ENCODE measurements at regions of chr6 and their contacts with region 1.

Region 1: DNA sequence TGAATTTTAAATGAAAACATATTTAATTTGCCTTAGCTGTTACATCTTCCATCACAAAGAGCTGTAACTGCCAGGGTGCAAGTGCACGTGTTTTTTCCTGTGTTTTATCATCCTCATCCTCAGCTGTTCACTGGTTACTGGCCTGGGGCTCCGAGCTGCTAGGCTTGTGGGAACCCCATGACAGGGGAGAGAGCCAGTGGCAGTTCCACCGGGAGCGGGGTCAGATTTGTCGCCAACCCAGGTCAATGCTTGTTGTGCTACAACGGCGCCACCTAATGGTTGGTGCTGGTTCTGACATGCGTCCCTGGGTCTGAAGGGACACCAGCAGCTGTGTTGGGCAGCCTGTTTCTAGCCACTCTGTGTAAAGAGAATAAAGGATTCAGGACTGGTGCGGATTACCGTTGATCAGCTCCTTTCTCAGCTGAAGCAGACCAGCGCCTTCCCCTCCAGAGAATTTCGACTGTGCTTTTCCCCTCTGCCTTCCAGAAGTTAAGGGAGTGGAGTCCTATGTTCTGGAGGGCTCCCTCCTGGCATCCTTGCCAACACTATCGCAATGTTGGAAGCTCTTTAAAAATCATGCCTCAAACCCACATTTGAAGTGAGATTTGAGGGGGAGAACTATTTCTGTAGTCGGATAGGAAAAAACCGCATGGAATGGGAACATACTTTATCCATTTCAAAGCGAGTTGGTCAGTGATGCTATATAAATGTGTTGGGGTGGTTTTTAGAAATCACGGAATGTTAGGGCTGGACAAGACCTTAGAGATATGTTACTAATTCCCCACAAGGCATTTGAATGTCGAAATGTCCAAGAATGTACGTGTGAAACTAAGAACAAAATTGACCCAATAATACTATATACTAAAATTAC is 32.1 kb downstream of the SUMO4 start:
- DNase-seq: peak; percentile 87
- H3K27ac ChIP-seq: no peak overlapping the region
- CTCF ChIP-seq: peak; percentile 92

Region 2: GRCh38 chr6:149028767-149029405 is 403.3 kb before region 1 on chr6:
- CTCF ChIA-PET with region 1: interaction called, 23 read pairs
- POLR2A ChIA-PET with region 1: no interaction called
- DNase-seq: peak; percentile 50
- H3K27ac ChIP-seq: no peak overlapping the region
- CTCF ChIP-seq: peak; percentile 63

Region 3: GRCh38 chr6:149077208-149077607 is 354.9 kb before region 1 on chr6:
- CTCF ChIA-PET with region 1: interaction called, 11 read pairs
- POLR2A ChIA-PET with region 1: no interaction called
- DNase-seq: no peak
- H3K27ac ChIP-seq: no peak overlapping the region
- CTCF ChIP-seq: no peak

Region 4: DNA sequence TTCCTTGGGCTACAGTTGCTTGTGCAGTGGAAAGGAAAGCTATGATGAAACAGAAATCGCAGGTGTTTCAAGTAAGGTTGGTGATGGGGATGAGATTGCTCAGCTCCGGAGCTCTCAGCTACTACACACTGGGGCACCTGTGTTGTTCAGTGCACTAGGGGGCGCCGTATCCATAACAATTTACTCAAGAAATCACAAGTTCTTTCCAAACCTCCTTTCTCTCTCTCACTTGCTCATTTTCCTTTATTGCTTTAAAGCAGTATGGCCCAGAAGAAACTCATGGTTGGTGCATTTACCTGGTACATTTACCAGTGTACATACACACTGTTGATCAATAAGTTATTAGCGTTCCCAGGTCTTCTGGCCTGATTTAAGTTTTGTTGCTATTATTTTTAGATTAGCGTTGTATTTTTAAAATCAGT is 349.8 kb before region 1 on chr6:
- CTCF ChIA-PET with region 1: interaction called, 22 read pairs
- POLR2A ChIA-PET with region 1: no interaction called
- DNase-seq: peak; percentile 68
- H3K27ac ChIP-seq: no peak overlapping the region
- CTCF ChIP-seq: peak; percentile 72

Region 5: DNA sequence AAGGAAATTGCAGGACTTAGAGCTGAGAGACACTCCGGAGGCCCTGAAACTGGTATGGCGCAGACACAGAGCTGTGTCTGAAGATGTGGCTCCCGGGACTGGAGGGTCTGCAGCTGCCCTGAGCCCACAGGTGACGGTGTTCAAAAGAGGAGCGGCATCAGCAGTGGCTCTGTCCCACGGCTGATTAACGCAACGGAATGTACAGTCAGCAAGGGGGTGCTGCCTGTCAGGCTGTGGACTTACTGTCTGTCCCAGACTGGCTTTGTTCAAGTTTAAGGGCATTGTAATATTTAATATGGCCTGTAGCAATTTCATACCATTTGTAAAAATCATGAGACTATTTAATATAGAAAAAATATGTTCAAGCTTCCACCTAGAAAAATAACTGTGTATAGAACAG is 342.6 kb before region 1 on chr6:
- CTCF ChIA-PET with region 1: interaction called, 22 read pairs
- POLR2A ChIA-PET with region 1: no interaction called
- DNase-seq: no peak
- H3K27ac ChIP-seq: no peak overlapping the region
- CTCF ChIP-seq: no peak

Region 6: GRCh38 chr6:149419696-149420404 is 12.3 kb before region 1 on chr6:
- CTCF ChIA-PET with region 1: interaction called, 11 read pairs
- POLR2A ChIA-PET with region 1: no interaction called
- DNase-seq: no peak
- H3K27ac ChIP-seq: no peak overlapping the region
- CTCF ChIP-seq: no peak

Measured in RWPE1 (cell line).